ENCODE measurements at regions of chr14 and their contacts with region 1.

Region 1: DNA sequence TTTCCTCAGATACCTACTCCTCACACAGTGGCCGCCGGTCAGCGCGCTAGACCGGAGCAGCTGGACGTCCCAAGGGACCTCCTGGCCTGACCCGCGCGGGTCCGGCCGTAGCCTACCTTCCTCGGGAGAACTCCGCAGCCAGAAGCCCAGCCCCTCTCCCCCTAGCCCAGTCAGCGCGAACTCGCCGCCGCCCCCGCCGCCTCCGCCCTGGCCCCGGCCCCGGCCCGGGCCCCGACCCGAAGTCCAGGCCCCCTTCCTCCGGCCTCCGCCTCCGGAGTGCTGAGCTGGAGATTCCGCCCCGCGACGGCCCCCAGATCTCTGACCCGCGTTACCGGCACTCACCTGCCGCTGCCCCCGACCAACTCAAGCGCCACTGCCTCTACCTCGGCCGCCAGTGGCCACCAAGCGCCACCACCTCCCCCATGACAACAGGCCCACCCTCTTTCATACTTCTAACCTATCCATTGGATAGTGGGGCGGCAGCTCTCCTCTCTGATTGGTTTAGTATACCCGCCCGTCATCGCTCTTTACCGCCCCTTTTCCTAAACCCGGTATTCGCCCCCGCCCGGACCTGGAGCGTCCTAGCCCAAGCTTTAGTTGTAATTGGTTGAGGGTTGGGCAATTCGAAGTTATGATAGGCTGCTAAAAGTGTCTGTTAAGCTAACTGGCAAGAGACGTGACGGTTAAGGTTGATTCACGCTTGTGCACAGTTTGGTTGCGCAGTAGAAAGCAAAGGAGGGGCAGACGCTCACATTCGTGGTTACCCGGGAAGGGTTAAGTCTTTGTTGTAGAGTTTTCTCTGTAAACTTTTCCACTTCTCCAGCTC is at the start of gene NUMB:
- DNase-seq: peak; percentile 96
- H3K4me3 Mint-ChIP-seq: peak within 1 kb of the TSS; percentile 98
- H3K27ac Mint-ChIP-seq: peak within 1 kb of the TSS; percentile 98
- H3K4me1 Mint-ChIP-seq: peaks cover 58% of the 10 kb centered on the region
- H3K27me3 Mint-ChIP-seq: no peaks in the 10 kb centered on the region
- total RNA-seq, gene NUMB: 49.6 and 53.4 TPM in 2 replicates

Region 2: DNA sequence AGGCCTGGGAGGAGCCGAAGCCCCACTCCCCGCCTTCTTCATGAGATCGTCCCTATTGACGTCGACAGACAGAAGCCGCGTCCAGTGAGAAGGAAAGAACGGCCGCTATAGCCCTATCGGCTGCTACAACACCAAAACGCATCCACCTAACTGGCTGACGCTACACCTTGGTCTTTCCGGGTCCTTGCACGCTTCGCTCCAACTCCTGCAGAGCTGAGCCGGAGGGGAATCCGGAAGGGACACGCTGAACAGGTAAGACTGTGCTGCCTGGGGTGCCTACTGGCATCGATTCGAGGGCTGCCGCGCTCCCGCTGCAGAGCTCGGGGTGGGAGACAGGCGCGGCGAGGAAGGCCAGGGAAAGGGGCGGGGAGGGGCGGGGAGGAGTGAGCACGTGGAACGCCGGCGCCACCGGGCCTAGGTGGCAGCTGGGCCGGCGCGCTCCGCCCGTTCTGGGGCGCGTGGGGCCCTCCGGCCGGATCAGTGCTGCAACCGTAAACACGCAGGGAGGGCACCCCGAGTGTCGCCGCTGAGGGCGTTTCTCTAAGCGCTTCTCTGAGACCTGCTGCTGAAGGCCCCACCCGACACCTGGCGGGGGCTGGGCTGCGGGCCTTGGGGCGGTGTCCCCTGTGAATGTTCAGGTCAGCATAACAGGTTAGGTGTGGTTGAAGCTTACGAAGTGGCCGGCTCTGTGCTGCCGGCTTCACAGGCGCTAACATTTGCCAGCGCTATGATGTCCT is 531.9 kb before region 1 on chr14 and contains the start of gene DCAF4:
- intact Hi-C with region 1: loop called (anchors 1 kb)
- DNase-seq: peak; percentile 94
- H3K4me3 Mint-ChIP-seq: peak within 1 kb of the TSS; percentile 90
- H3K27ac Mint-ChIP-seq: peak within 1 kb of the TSS; percentile 95
- H3K4me1 Mint-ChIP-seq: peaks cover 8% of the 10 kb centered on the region
- H3K27me3 Mint-ChIP-seq: peaks cover 16% of the 10 kb centered on the region
- total RNA-seq, gene DCAF4: 17.1 and 20.4 TPM in 2 replicates

Region 3: GRCh38 chr14:73026845-73027542 is 431.4 kb before region 1 on chr14 and contains the start of gene ZFYVE1:
- intact Hi-C with region 1: loop called (anchors 5 kb)
- DNase-seq: peak; percentile 90
- H3K4me3 Mint-ChIP-seq: peak within 1 kb of the TSS; percentile 97
- H3K27ac Mint-ChIP-seq: peak within 1 kb of the TSS; percentile 94
- H3K4me1 Mint-ChIP-seq: peaks cover 44% of the 10 kb centered on the region
- H3K27me3 Mint-ChIP-seq: peaks cover 1% of the 10 kb centered on the region
- total RNA-seq, gene ZFYVE1: 7.1 and 7.6 TPM in 2 replicates

Region 4: DNA sequence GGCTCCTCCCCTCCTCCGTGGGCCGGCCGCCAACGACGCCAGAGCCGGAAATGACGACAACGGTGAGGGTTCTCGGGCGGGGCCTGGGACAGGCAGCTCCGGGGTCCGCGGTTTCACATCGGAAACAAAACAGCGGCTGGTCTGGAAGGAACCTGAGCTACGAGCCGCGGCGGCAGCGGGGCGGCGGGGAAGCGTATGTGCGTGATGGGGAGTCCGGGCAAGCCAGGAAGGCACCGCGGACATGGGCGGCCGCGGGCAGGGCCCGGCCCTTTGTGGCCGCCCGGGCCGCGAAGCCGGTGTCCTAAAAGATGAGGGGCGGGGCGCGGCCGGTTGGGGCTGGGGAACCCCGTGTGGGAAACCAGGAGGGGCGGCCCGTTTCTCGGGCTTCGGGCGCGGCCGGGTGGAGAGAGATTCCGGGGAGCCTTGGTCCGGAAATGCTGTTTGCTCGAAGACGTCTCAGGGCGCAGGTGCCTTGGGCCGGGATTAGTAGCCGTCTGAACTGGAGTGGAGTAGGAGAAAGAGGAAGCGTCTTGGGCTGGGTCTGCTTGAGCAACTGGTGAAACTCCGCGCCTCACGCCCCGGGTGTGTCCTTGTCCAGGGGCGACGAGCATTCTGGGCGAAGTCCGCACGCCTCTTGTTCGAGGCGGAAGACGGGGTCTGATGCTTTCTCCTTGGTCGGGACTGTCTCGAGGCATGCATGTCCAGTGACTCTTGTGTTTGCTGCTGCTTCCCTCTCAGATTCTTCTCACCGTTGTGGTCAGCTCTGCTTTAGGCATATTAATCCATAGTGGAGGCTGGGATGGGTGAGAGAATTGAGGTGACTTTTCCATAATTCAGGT is 321.8 kb before region 1 on chr14 and contains the start of gene PSEN1:
- intact Hi-C with region 1: loop called (anchors 1 kb)
- DNase-seq: peak; percentile 98
- H3K4me3 Mint-ChIP-seq: peak within 1 kb of the TSS; percentile 86
- H3K27ac Mint-ChIP-seq: peak within 1 kb of the TSS; percentile 100
- H3K4me1 Mint-ChIP-seq: peaks cover 19% of the 10 kb centered on the region
- H3K27me3 Mint-ChIP-seq: no peaks in the 10 kb centered on the region
- total RNA-seq, gene PSEN1: 41.1 and 41.9 TPM in 2 replicates

Region 5: DNA sequence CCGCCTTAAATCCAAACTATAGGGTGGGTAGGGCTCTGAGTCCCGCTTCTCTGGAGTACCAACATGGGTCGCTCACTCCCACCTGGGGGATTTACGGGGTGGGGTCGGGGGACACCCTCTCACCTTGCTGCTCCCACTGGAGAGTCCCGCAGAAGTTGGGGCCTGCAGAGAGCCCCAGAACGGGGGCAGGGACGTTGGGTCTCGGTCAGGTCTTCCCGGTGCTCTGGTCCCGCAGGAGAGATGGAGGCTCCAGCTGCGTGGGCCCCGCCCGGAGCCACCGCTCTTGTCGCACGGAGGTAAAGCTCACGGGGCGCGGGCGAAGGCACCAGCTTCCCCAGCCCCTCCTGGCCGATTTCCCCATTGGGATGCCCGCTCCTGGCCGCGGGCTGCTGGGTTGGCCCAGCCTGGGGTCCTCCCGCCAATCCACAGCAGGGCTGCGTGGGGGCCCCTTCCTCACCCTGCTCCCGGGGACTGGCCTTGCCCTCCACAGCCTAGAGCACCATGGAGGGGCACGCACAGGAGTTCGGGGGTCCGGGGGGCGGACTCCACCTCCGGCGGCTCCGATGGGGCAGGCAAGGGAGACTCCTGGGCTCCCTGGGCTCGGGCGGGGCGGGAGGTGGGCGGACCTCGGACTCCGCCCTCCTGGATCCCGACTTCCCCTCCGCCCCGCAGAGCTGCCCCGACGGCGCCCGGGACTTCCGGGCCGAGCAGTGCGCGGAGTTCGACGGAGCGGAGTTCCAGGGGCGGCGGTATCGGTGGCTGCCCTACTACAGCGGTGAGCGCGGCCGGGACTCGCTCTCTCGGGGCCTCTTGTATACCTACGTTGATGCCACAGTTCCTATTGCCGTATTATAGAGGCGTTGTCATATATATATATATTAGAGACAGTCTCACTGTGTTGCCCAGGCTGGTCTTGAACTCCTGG is 212.7 kb before region 1 on chr14:
- intact Hi-C with region 1: no loop called
- DNase-seq: peak; percentile 36
- H3K4me3 Mint-ChIP-seq: peak overlapping the region; percentile 73
- H3K27ac Mint-ChIP-seq: no peak overlapping the region
- H3K4me1 Mint-ChIP-seq: peaks cover 41% of the 10 kb centered on the region
- H3K27me3 Mint-ChIP-seq: peaks cover 40% of the 10 kb centered on the region

Region 6: DNA sequence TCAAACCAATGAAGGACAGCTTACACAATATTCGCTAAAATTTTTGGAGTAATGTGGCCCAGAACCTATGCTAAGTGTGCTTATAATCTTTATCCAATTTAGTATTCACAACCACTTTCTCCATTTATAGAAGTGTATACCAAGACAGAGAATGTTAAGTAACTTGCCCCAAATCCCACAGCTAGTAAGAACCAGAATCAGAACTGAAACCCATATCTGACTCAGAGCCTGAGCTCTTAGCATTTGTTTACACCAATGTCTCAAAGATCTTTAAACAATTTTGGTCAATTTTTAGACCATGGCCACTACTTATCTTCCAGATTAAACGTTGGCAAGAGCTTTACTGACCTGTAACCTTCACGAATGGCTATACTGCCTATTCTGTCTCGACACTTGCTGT is 168.1 kb before region 1 on chr14:
- intact Hi-C with region 1: loop called (anchors 1 kb)
- DNase-seq: no peak
- H3K4me3 Mint-ChIP-seq: peak overlapping the region; percentile 25
- H3K27ac Mint-ChIP-seq: peak overlapping the region; percentile 63
- H3K4me1 Mint-ChIP-seq: peaks cover 49% of the 10 kb centered on the region
- H3K27me3 Mint-ChIP-seq: no peaks in the 10 kb centered on the region

Region 7: GRCh38 chr14:73472185-73473114 is 14.1 kb after region 1 on chr14:
- intact Hi-C with region 1: loop called (anchors 1 kb)
- DNase-seq: no peak
- H3K4me3 Mint-ChIP-seq: no peak overlapping the region
- H3K27ac Mint-ChIP-seq: no peak overlapping the region
- H3K4me1 Mint-ChIP-seq: peaks cover 25% of the 10 kb centered on the region
- H3K27me3 Mint-ChIP-seq: peaks cover 4% of the 10 kb centered on the region